Caco-2 (cell line): ENCODE measurements at regions of chr17 and their contacts with region 1.

Region 1: DNA sequence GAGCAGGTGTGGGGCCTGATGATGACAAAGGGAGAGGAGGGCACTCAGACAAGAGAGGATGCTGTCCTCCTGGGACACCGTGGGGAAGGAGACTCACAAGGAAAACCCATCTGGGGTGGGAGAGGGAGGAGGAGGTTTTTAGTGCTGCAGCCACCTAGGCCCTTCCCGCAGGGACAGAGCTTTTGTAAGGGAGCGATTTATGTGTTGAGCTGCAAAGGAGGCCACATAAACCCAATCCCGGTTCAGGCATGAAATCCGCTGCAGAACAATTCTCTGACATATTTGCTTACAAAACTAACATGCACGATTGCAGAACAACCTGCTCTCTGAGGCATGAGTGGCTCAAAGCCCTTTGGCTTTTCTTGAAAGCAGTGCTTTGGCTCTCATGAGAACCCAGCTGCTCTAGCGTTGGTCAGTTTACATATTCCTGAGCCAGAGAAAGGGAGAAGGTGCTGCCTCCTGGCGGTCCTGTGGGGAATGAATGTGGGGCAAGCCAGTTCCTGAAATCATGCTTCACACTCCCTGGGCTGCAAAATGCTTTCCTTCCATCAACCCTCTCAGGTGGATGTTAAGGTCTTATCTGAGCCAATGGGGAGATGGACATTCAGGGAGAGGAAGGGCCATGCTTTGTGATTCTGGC is 122.4 kb upstream of the NLRP1 start:
- DNase-seq: peak; percentile 37 to 42
- H3K4me3 ChIP-seq: no peak overlapping the region
- H3K4me3 Mint-ChIP-seq: no peak overlapping the region
- H3K27ac Mint-ChIP-seq: no peak overlapping the region
- H3K4me1 ChIP-seq: no peaks in the 10 kb centered on the region
- H3K4me1 Mint-ChIP-seq: no peaks in the 10 kb centered on the region
- H3K27me3 ChIP-seq: no peaks in the 10 kb centered on the region
- H3K27me3 Mint-ChIP-seq: peaks cover 4% of the 10 kb centered on the region
- CTCF ChIP-seq: peak; percentile 31 to 52

Region 2: GRCh38 chr17:5545051-5545987 is 161.4 kb before region 1 on chr17:
- CTCF ChIA-PET with region 1: no interaction called
- POLR2A ChIA-PET with region 1: no interaction called
- intact Hi-C with region 1: no loop called
- DNase-seq: no peak
- H3K4me3 ChIP-seq: no peak overlapping the region
- H3K4me3 Mint-ChIP-seq: no peak overlapping the region
- H3K27ac Mint-ChIP-seq: no peak overlapping the region
- H3K4me1 ChIP-seq: no peaks in the 10 kb centered on the region
- H3K4me1 Mint-ChIP-seq: no peaks in the 10 kb centered on the region
- H3K27me3 ChIP-seq: no peaks in the 10 kb centered on the region
- H3K27me3 Mint-ChIP-seq: peaks cover 16% of the 10 kb centered on the region
- CTCF ChIP-seq: no peak

Region 3: DNA sequence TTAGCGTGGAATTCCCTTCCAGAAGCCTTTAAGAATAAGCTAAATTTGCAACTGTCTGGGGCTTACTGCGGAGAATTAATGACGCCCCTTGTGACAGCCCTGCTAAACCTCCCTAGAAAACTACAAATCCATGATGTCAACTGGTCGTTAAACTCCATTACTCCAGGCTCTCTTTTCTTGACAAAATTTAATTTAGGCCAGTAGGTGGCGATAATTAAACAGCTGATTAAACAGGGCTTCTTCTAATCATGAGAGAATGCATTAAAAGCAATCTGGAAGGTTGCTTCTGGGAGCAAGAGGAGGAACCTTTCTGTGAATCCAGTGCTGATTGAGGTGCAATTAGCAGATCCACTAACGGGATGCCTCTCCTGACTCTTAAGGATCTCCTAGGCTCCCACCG is 114.3 kb before region 1 on chr17:
- CTCF ChIA-PET with region 1: interaction called, 5 read pairs
- POLR2A ChIA-PET with region 1: no interaction called
- intact Hi-C with region 1: loop called (anchors 2 kb)
- DNase-seq: peak in 1 of 2 experiments; percentile 18
- H3K4me3 ChIP-seq: no peak overlapping the region
- H3K4me3 Mint-ChIP-seq: no peak overlapping the region
- H3K27ac Mint-ChIP-seq: no peak overlapping the region
- H3K4me1 ChIP-seq: no peaks in the 10 kb centered on the region
- H3K4me1 Mint-ChIP-seq: no peaks in the 10 kb centered on the region
- H3K27me3 ChIP-seq: no peaks in the 10 kb centered on the region
- H3K27me3 Mint-ChIP-seq: peaks cover 24% of the 10 kb centered on the region
- CTCF ChIP-seq: peak; percentile 9 to 20